Activated B cell treated with CpG ODN at 0.5 μM for 24 hours (primary cell): ENCODE measurements at regions of chr1 and their contacts with region 1.

Region 1: GRCh38 chr1:20430355-20431175 is 55.4 kb downstream of the CAMK2N1 start:
- DNase-seq: no peak
- ATAC-seq: no peak
- H3K4me3 Mint-ChIP-seq: no peak overlapping the region
- H3K27ac Mint-ChIP-seq: no peak overlapping the region
- H3K4me1 Mint-ChIP-seq: peaks cover 3% of the 10 kb centered on the region
- H3K27me3 Mint-ChIP-seq: peaks cover 31% of the 10 kb centered on the region
- CTCF ChIP-seq: no peak

Region 2: GRCh38 chr1:20233394-20233793 is 197.2 kb before region 1 on chr1:
- CTCF ChIA-PET with region 1: interaction called, 7 read pairs
- POLR2A ChIA-PET with region 1: no interaction called
- intact Hi-C with region 1: loop called (anchors 1 kb)
- DNase-seq: no peak
- ATAC-seq: peak; percentile 31
- H3K4me3 Mint-ChIP-seq: no peak overlapping the region
- H3K27ac Mint-ChIP-seq: no peak overlapping the region
- H3K4me1 Mint-ChIP-seq: no peaks in the 10 kb centered on the region
- H3K27me3 Mint-ChIP-seq: peaks cover 48% of the 10 kb centered on the region
- CTCF ChIP-seq: no peak